PC-9 (cell line): ENCODE measurements at regions of chr1 and their contacts with region 1.

Region 1: GRCh38 chr1:117895482-117896114 is 33.8 kb downstream of the GDAP2 start:
- DNase-seq: peak; percentile 51 to 69
- H3K4me3 ChIP-seq: no peak overlapping the region
- H3K27ac ChIP-seq: no peak overlapping the region
- H3K4me1 ChIP-seq: no peaks in the 10 kb centered on the region
- H3K27me3 ChIP-seq: no peaks in the 10 kb centered on the region
- CTCF ChIP-seq: peak; percentile 98

Region 2: GRCh38 chr1:117512743-117513321 is 382.8 kb before region 1 on chr1:
- CTCF ChIA-PET with region 1: interaction called, 6 read pairs
- POLR2A ChIA-PET with region 1: no interaction called
- intact Hi-C with region 1: loop called (anchors 1 kb)
- DNase-seq: no peak
- H3K4me3 ChIP-seq: no peak overlapping the region
- H3K27ac ChIP-seq: no peak overlapping the region
- H3K4me1 ChIP-seq: no peaks in the 10 kb centered on the region
- H3K27me3 ChIP-seq: no peaks in the 10 kb centered on the region
- CTCF ChIP-seq: peak; percentile 97